CD4-positive, alpha-beta T cell (primary cell): ENCODE measurements at regions of chr6 and their contacts with region 1.

Region 1: GRCh38 chr6:90216072-90216977 is 80.3 kb downstream of the BACH2 start:
- DNase-seq: peak in 9 of 14 experiments; percentile 13 to 83 (median 60)
- ATAC-seq: peak; percentile 42
- H3K4me3 ChIP-seq: no peak overlapping the region
- H3K4me3 Mint-ChIP-seq: peak overlapping the region; percentile 78
- H3K27ac ChIP-seq: peak overlapping the region; percentile 52 to 76
- H3K27ac Mint-ChIP-seq: no peak overlapping the region
- H3K4me1 ChIP-seq: peaks cover 60% of the 10 kb centered on the region
- H3K4me1 Mint-ChIP-seq: peaks cover 33% of the 10 kb centered on the region
- H3K27me3 ChIP-seq: no peaks in the 10 kb centered on the region
- H3K27me3 Mint-ChIP-seq: no peaks in the 10 kb centered on the region
- CTCF ChIP-seq: no peak

Region 2: GRCh38 chr6:89819336-89820130 is 396.8 kb before region 1 on chr6 and contains the start of gene MDN1:
- CTCF ChIA-PET with region 1: no interaction called
- POLR2A ChIA-PET with region 1: no interaction called
- intact Hi-C with region 1: no loop called
- DNase-seq: peak; percentile 67 to 96 (median 82)
- ATAC-seq: peak; percentile 91
- H3K4me3 ChIP-seq: peak within 1 kb of the TSS; percentile 91
- H3K4me3 Mint-ChIP-seq: peak within 1 kb of the TSS; percentile 93
- H3K27ac ChIP-seq: peak within 1 kb of the TSS; percentile 79 to 83
- H3K27ac Mint-ChIP-seq: peak within 1 kb of the TSS; percentile 86
- H3K4me1 ChIP-seq: peaks cover 24% of the 10 kb centered on the region
- H3K4me1 Mint-ChIP-seq: peaks cover 36% of the 10 kb centered on the region
- H3K27me3 ChIP-seq: no peaks in the 10 kb centered on the region
- H3K27me3 Mint-ChIP-seq: no peaks in the 10 kb centered on the region
- CTCF ChIP-seq: no peak
- total RNA-seq, gene MDN1: 40.3 to 40.4 TPM

Region 3: GRCh38 chr6:90080876-90081481 is 135.3 kb before region 1 on chr6:
- CTCF ChIA-PET with region 1: no interaction called
- POLR2A ChIA-PET with region 1: interaction called, 7 read pairs
- intact Hi-C with region 1: loop called in 1 of 2 experiments (anchors 5 kb)
- DNase-seq: peak; percentile 31 to 85 (median 54)
- ATAC-seq: peak; percentile 80
- H3K4me3 ChIP-seq: peak overlapping the region; percentile 52
- H3K4me3 Mint-ChIP-seq: peak overlapping the region; percentile 93
- H3K27ac ChIP-seq: peak overlapping the region; percentile 57 to 68
- H3K27ac Mint-ChIP-seq: peak overlapping the region; percentile 92
- H3K4me1 ChIP-seq: peaks cover 35% of the 10 kb centered on the region
- H3K4me1 Mint-ChIP-seq: peaks cover 98% of the 10 kb centered on the region
- H3K27me3 ChIP-seq: no peaks in the 10 kb centered on the region
- H3K27me3 Mint-ChIP-seq: no peaks in the 10 kb centered on the region
- CTCF ChIP-seq: no peak

Region 4: DNA sequence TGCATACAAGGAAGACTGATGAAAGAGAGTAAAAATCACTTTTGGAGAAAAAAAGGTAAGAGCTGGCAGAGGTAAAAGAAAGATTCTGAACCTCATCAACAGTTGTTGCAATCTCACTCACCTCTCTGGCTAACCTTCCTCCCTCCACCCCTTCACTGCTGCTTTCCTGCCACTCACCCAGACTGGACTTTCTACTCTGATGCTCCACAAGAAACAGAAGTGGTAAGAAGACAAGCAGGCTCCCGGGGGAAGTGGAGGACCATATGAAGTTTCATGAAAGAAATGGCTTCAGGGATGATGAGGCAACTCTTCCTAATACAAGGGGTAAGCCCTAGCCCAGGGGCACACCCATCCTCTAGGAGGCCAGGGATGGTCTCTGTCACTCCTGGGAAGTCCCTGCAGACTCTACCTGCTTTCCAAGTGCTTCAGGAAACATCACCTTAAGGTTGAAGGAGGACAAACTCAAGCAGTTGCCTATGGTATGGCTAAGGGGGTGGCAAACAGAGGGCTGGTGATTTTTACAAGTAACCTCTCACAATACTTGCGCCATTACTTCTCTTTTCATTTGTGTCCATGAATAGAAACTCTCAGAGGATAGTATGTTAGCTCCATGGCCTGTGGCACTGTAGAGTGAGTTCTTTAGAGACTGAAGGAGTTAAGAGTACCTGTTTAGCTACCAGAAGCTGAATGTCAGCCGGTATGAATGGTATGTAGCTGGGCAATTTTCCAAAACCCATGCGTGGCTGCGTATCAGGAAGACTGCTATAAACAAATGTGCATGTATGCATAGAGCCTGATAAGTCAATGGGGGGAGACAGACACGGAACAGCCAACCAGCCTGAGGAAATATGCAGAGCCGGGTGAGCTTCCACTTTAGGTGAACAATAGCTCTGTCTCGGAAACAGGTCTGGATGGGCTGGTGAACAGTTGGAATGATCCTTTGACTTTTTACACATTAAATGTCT is 31.7 kb before region 1 on chr6:
- CTCF ChIA-PET with region 1: interaction called, 3 read pairs
- POLR2A ChIA-PET with region 1: interaction called, 9 read pairs
- intact Hi-C with region 1: loop called in 1 of 2 experiments (anchors 2 kb)
- DNase-seq: peak in 3 of 14 experiments; percentile 22 to 47 (median 40)
- ATAC-seq: peak; percentile 25
- H3K4me3 ChIP-seq: no peak overlapping the region
- H3K4me3 Mint-ChIP-seq: peak overlapping the region; percentile 76
- H3K27ac ChIP-seq: peak overlapping the region in 1 of 2 donors; percentile 17
- H3K27ac Mint-ChIP-seq: peak overlapping the region; percentile 99
- H3K4me1 ChIP-seq: peaks cover 26% of the 10 kb centered on the region
- H3K4me1 Mint-ChIP-seq: peaks cover 85% of the 10 kb centered on the region
- H3K27me3 ChIP-seq: no peaks in the 10 kb centered on the region
- H3K27me3 Mint-ChIP-seq: no peaks in the 10 kb centered on the region
- CTCF ChIP-seq: no peak

Region 5: GRCh38 chr6:90241229-90241880 is 25.0 kb after region 1 on chr6:
- CTCF ChIA-PET with region 1: no interaction called
- POLR2A ChIA-PET with region 1: interaction called, 10 read pairs
- intact Hi-C with region 1: no loop called
- DNase-seq: peak in 2 of 14 experiments; percentile 29 to 42
- ATAC-seq: no peak
- H3K4me3 ChIP-seq: no peak overlapping the region
- H3K4me3 Mint-ChIP-seq: peak overlapping the region; percentile 30
- H3K27ac ChIP-seq: peak overlapping the region in 1 of 2 donors; percentile 21
- H3K27ac Mint-ChIP-seq: peak overlapping the region; percentile 60
- H3K4me1 ChIP-seq: peaks cover 25% of the 10 kb centered on the region
- H3K4me1 Mint-ChIP-seq: peaks cover 74% of the 10 kb centered on the region
- H3K27me3 ChIP-seq: no peaks in the 10 kb centered on the region
- H3K27me3 Mint-ChIP-seq: no peaks in the 10 kb centered on the region
- CTCF ChIP-seq: no peak

Region 6: DNA sequence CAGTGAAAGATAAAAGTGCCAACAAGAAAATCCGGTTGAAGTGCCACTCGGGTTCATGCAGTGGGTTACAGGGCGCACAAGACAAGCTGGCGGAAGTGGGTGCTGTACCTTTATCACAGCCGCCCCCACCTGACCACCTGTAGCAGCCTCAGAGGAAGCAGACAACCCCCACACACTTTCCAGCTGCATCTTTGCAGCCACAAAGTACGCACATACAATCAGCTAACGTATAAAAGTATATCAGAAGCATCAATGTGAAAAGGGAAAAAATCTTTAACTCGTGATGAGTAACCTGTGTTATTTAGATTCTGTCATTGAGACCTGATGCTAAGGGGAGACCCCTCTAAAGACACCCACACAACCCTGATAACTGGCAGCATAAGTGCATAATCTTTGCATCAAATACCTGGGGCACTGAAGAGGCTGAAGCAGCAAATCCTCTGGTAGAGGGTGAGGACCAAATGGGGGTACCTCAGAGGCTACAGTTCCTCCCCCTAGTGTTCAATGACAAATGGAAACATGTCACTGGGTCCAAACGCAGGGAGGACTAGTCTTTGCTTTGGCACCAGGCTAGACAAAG is 58.2 kb after region 1 on chr6:
- CTCF ChIA-PET with region 1: no interaction called
- POLR2A ChIA-PET with region 1: interaction called, 41 read pairs
- intact Hi-C with region 1: loop called in 1 of 2 experiments (anchors 1 kb)
- DNase-seq: peak; percentile 80 to 98 (median 86)
- ATAC-seq: peak; percentile 89
- H3K4me3 ChIP-seq: peak overlapping the region; percentile 5
- H3K4me3 Mint-ChIP-seq: peak overlapping the region; percentile 71
- H3K27ac ChIP-seq: peak overlapping the region; percentile 75 to 90
- H3K27ac Mint-ChIP-seq: peak overlapping the region; percentile 97
- H3K4me1 ChIP-seq: peaks cover 39% of the 10 kb centered on the region
- H3K4me1 Mint-ChIP-seq: peaks cover 89% of the 10 kb centered on the region
- H3K27me3 ChIP-seq: no peaks in the 10 kb centered on the region
- H3K27me3 Mint-ChIP-seq: no peaks in the 10 kb centered on the region
- CTCF ChIP-seq: peak; percentile 30

Region 7: DNA sequence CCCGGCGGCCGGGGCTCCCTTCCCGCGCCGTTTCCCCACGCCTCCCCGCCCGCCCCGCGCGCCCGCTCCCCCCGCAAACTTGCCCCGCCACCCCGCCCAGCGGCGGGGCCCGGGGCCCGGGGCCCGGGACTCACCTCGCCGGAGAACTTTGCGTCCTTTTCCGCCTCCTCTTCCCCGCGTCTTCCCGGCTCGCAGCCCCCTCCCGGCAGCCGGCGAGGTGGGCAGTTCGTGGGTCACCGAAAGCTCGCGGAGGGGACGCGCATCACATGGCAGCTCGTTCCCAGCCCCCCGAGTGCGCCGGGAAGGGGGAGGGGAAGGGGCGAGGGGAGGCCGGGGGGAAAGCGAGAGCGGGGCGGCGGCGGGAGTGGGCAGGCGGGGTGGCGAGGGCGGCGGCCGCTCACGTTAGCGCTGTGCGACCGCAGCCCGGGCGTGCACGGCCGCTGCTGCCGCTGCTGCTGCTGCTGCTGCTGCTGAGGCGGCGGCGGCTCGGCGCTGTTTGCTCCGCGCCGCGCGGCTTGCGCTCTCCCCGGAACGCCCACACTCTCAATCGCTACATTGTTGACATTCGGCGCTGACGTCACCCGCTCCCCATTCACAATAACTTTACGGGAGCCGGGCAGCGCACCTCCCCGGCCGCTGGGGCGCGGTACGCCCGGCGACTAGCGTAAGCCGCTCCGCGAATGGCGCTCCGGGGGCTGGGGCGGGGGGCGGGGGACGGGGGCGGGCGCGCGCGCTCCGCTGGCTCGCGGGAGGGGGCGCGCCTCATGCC is 80.2 kb after region 1 on chr6 and contains the start of gene BACH2:
- CTCF ChIA-PET with region 1: interaction called, 5 read pairs
- POLR2A ChIA-PET with region 1: interaction called, 24 read pairs
- intact Hi-C with region 1: loop called (anchors 2 to 5 kb)
- DNase-seq: peak; percentile 88 to 98 (median 95)
- ATAC-seq: peak; percentile 74
- H3K4me3 ChIP-seq: peak within 1 kb of the TSS; percentile 82
- H3K4me3 Mint-ChIP-seq: peak within 1 kb of the TSS; percentile 97
- H3K27ac ChIP-seq: peak within 1 kb of the TSS; percentile 52 to 89
- H3K27ac Mint-ChIP-seq: peak within 1 kb of the TSS; percentile 91
- H3K4me1 ChIP-seq: peaks cover 34% of the 10 kb centered on the region
- H3K4me1 Mint-ChIP-seq: peaks cover 45% of the 10 kb centered on the region
- H3K27me3 ChIP-seq: no peaks in the 10 kb centered on the region
- H3K27me3 Mint-ChIP-seq: peaks cover 4% of the 10 kb centered on the region
- CTCF ChIP-seq: no peak
- total RNA-seq, gene BACH2: 157 to 170 TPM

Region 8: GRCh38 chr6:90478789-90479602 is 262.7 kb after region 1 on chr6:
- CTCF ChIA-PET with region 1: interaction called, 4 read pairs
- POLR2A ChIA-PET with region 1: interaction called, 3 read pairs
- intact Hi-C with region 1: loop called (anchors 2 to 5 kb)
- DNase-seq: peak; percentile 64 to 92 (median 78)
- ATAC-seq: peak; percentile 99
- H3K4me3 ChIP-seq: no peak overlapping the region
- H3K4me3 Mint-ChIP-seq: peak overlapping the region; percentile 58
- H3K27ac ChIP-seq: no peak overlapping the region
- H3K27ac Mint-ChIP-seq: peak overlapping the region; percentile 66
- H3K4me1 ChIP-seq: peaks cover 18% of the 10 kb centered on the region
- H3K4me1 Mint-ChIP-seq: peaks cover 34% of the 10 kb centered on the region
- H3K27me3 ChIP-seq: no peaks in the 10 kb centered on the region
- H3K27me3 Mint-ChIP-seq: no peaks in the 10 kb centered on the region
- CTCF ChIP-seq: peak; percentile 89